HEK293T (cell line): ENCODE measurements at regions of chr19 and their contacts with region 1.

Region 1: DNA sequence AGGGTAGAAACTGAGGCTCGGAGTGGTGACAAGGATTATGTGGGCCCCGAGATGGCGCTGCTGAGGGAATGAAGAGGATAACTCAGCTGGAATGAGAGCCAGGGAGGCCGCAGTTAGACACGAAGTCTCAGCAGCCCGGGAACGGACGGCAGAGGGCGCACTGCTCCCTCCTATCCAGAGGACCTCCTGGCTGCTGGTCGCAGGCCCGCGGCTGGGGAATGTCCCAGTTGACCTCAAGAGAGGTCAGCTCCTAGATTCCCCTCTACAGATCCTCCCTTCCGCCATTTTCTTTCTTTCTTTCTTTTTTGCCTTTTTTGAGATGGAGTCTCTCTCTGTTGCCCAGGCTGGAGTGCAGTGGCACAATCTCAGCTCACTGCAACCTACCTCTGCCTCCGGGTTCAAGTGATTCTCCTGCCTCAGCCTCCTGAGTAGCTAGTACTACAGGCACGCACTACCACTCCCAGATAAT is 24.1 kb upstream of the ASPDH start:
- DNase-seq: peak; percentile 92

Region 2: DNA sequence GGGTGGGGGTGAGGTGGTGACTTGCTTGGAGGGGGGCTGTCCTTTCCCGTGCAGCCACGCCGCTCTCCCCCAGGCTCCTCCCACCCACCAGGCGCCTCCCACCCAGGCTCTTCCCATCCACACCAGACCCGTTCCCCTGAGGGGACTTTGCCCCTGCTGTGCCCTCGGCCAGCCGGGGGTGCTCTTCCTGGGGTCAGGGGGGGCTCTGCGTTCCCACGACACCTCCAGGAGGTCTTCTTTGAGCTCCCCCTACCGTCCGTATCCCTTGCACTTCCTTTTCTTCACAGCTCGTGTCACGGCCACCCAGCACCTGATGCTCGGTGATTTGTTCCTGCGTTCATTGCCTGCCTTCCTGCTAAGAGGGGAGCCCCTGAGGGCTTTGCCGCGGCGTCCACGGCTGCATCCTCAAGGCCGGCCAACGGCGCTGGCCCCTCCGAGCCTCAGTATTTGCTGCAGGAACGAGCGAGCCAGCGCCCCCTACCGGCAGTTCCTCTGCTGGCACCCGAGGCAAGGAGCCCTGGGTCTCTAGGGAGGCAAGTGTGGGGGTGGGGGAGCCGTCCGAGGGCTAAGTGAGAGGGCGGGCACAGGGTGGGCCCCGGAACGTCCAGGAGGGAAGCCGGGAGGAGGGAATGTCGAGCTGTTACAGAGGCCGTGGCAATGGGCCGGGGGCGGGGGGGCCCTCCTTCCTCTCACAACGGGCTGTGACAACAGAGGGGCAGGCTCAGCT is 18.6 kb after region 1 on chr19:
- CTCF ChIA-PET with region 1: interaction called, 27 read pairs
- POLR2A ChIA-PET with region 1: no interaction called
- DNase-seq: peak; percentile 92

Region 3: DNA sequence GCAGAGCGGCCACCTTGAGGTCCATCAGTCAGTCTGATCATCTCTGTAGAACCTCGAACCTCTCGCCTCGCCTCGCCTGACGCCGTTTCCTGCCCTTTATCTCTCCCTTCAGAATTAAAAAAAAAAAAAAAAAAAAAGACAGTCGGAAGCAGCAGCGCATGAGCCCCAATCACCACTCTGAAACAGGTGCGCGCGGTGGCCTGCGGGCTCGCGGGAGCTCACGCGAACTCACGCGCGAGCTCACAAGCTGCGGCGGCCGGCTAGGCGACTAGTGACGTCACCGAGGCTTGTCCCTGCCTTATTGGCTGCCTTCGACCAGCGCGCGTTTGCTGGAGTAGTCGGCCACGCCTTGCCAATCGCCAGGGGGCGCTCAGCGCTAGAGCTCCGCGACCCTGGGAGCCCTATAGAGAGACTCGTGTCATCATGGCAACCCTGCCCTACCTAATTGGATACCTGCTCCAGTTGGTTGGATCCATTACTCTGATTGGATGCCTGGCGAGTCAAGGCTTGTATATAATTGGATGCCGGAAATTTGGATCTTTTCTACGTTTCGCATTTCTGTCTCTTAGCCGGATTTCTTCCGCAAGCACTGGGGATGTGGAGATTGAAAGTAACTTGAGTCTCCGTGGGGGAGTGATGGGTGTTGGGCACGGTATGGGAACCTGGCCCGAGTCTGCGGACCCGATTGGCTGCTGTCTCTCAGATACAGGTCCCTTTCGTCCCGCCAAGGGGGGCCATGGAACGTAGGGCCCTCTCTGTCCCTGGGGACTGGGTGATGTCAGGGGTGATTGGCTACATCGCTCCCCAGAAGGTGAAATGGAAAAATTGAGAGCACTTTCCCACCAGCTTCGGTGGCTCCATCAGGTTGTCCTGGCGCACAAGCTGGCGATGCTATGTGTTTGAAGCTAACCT is 70.3 kb after region 1 on chr19:
- CTCF ChIA-PET with region 1: no interaction called
- POLR2A ChIA-PET with region 1: no interaction called
- DNase-seq: peak; percentile 98

Region 4: DNA sequence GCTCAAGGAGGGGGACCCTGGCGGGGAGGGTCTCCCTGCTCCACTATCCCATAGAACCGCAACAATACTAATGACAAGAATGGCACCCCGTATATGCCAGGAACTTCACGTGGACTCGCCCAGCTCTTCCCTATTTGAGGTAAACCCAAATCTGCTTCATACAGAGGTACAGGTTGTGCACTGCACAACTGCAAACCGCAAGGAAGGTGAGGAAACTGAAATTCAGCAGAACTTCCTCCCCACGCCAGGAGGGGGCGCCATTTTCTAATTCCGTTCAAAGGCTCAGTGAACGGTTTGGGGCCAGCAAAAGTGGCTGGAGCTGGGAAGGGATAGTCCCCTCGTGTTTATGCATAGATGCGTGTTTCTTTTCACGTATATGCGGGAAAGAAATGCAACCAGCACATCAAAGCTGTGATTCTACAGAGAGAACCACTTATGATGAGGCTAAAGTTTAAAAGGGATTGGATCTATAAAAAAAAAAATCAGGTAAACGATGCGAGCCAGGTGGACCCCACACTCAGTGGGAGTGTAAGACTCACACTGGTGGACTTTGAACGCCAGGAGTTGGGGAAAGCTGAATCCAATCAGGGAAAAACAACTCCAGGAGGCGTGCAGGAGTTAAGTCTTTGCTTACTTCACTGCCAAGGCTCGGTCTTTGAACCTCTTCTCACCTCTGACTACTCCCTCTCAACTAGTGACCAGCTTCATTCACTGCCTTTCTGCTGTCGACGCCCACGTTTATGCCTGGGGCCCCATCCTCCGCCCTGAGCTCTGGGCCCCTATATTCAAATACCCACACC is 131.7 kb after region 1 on chr19:
- CTCF ChIA-PET with region 1: interaction called, 10 read pairs
- POLR2A ChIA-PET with region 1: no interaction called
- DNase-seq: peak; percentile 60